Activated naive CD4-positive, alpha-beta T cell treated with anti-CD3 and anti-CD28 coated beads for 36 hours (primary cell): ENCODE measurements at regions of chr2 and their contacts with region 1.

Region 1: DNA sequence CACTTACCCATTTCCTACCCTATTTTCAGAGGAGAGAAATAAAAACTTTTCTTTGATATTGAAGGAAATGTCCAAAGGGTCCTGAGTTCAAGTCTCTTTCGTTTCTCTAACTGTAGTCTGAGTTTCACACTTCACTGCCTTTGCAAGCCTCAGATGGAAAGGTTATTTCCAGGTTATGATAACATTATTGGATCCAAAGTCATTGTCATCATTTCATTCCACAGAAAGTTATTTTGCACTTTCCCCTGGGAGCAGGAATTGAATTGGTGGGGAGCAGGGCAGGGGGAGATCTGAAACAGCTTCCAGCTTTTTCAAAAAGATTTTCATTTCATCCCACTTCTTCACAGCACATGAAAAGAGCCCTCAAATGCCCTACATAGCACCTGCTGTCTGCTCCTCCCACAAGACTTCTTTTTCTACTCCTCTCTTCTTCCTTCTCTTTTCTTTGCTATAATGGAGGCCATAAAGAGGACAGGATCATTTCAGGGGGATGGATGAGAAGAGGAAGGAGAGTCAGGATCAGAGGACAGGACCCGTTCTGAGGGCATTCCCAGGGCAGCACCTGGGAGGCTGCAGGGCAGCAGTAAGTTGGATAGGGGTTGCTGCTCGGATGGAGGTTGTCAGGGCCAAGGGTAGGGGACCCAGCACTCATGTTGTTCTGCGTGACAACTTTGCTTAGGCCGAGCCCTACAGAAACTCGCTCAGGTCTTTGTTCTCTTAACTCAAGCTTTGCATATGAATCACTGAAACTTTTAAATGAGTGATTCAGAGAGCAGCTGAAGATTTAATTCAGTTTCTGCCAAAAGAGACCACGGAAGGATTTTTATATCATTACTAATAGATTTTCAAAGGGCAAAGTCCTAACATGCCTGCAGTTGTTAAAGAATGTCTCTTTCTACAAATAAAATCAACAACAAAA is 11.4 kb upstream of the GALNT5 start:
- DNase-seq: peak; percentile 49
- H3K4me3 Mint-ChIP-seq: no peak overlapping the region
- H3K27ac Mint-ChIP-seq: no peak overlapping the region
- H3K4me1 Mint-ChIP-seq: peaks cover 18% of the 10 kb centered on the region
- H3K27me3 Mint-ChIP-seq: peaks cover 7% of the 10 kb centered on the region

Region 2: DNA sequence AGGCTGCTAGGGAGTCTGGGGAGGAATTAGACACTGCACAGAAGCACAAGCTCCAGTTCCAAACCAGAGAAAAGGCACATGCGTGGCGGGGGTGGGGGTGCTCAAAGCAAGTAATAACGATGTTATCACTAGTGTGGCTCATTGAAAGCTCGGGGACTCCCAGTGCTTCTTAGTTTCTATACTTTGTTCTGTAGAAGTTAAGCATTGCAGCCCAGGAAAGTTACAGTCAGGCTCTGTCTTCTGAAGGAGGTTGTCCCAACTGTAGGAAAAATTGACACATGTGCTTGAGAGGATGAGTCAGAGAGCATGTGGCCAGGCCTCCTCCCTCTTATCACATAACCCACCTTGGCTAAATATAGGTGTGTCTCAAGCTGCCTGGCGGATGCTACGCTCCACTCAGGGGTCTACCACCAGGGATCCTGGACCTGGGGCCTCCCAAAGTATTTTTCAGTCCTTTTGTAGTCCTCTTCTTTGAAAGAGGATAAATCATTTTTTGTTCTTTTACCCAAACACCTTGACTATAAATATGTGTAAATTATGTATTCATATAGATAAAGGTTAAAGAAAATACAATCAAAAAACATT is 15.2 kb after region 1 on chr2:
- CTCF ChIA-PET with region 1: interaction called, 3 read pairs
- intact Hi-C with region 1: loop called (anchors 1 kb)
- DNase-seq: peak; percentile 83
- H3K4me3 Mint-ChIP-seq: no peak overlapping the region
- H3K27ac Mint-ChIP-seq: peak overlapping the region; percentile 2
- H3K4me1 Mint-ChIP-seq: peaks cover 25% of the 10 kb centered on the region
- H3K27me3 Mint-ChIP-seq: peaks cover 11% of the 10 kb centered on the region

Region 3: GRCh38 chr2:157492189-157492773 is 246.2 kb after region 1 on chr2:
- CTCF ChIA-PET with region 1: no interaction called
- intact Hi-C with region 1: no loop called
- DNase-seq: peak; percentile 89
- H3K4me3 Mint-ChIP-seq: no peak overlapping the region
- H3K27ac Mint-ChIP-seq: no peak overlapping the region
- H3K4me1 Mint-ChIP-seq: peaks cover 62% of the 10 kb centered on the region
- H3K27me3 Mint-ChIP-seq: no peaks in the 10 kb centered on the region